B cell (primary cell): ENCODE measurements at regions of chr11 and their contacts with region 1.

Region 1: DNA sequence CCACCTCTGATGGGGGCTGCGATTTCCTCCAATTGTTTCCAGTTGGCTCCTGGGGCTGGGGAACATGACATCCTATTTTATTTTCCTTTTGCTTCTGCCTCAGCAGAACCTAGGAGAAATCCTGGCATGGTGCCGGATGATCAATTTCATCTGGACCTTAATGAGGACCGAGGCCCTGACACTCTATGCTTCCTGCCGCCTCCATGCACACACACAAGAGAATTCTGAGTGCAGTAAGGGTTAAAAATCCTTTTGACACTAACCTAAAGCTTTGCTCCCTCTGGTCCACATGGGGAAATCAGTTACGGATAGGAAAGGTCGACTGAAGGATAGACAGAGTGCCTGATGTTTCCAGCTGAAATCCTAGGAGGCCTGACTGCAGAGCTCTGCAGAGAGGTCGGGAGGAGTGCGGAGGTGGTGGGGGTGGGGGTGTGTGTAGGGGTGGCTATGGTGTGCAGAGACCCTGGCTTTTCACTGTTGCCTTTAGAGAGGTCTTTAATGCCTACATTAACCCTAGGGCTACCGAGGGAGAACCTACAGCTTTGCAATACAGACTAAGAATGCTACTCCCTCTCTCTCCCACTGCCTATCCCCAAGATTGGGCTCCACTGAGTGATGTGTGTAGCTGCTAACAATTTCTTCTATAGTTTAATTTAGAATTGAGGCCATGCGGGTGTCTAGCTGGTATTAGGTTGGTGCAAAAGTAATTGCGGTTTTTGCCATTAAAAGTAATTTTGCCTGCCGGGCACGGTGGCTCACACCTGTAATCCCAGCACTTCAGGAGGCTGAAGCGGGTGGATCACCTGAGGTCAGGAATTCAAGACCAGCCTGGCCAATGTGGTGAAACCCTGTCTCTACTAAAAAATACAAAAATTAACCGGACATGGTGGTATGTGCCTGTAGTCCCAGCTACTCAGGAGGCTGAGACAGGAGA is 53.6 kb upstream of the INCENP start:
- DNase-seq: no peak
- ATAC-seq: no peak
- H3K4me3 ChIP-seq: no peak overlapping the region
- H3K4me3 Mint-ChIP-seq: no peak overlapping the region
- H3K27ac ChIP-seq: no peak overlapping the region
- H3K27ac Mint-ChIP-seq: no peak overlapping the region
- H3K4me1 ChIP-seq: no peaks in the 10 kb centered on the region
- H3K4me1 Mint-ChIP-seq: no peaks in the 10 kb centered on the region
- H3K27me3 ChIP-seq: no peaks in the 10 kb centered on the region
- H3K27me3 Mint-ChIP-seq: peaks cover 23% of the 10 kb centered on the region
- CTCF ChIP-seq: no peak

Region 2: GRCh38 chr11:61860054-61860903 is 210.0 kb before region 1 on chr11:
- CTCF ChIA-PET with region 1: no interaction called
- POLR2A ChIA-PET with region 1: no interaction called
- intact Hi-C with region 1: no loop called
- DNase-seq: no peak
- ATAC-seq: no peak
- H3K4me3 ChIP-seq: no peak overlapping the region
- H3K4me3 Mint-ChIP-seq: no peak overlapping the region
- H3K27ac ChIP-seq: no peak overlapping the region
- H3K27ac Mint-ChIP-seq: no peak overlapping the region
- H3K4me1 ChIP-seq: no peaks in the 10 kb centered on the region
- H3K4me1 Mint-ChIP-seq: no peaks in the 10 kb centered on the region
- H3K27me3 ChIP-seq: no peaks in the 10 kb centered on the region
- H3K27me3 Mint-ChIP-seq: no peaks in the 10 kb centered on the region
- CTCF ChIP-seq: no peak

Region 3: GRCh38 chr11:62923601-62924411 is 853.6 kb after region 1 on chr11:
- CTCF ChIA-PET with region 1: no interaction called
- POLR2A ChIA-PET with region 1: interaction called, 10 read pairs
- intact Hi-C with region 1: no loop called
- DNase-seq: peak; percentile 74
- ATAC-seq: peak; percentile 72
- H3K4me3 ChIP-seq: peak overlapping the region in 4 of 5 experiments; percentile 3 to 64 (median 32)
- H3K4me3 Mint-ChIP-seq: peak overlapping the region; percentile 72
- H3K27ac ChIP-seq: no peak overlapping the region
- H3K27ac Mint-ChIP-seq: no peak overlapping the region
- H3K4me1 ChIP-seq: peaks cover 39 to 41% of the 10 kb centered on the region in 2 donors
- H3K4me1 Mint-ChIP-seq: peaks cover 37% of the 10 kb centered on the region
- H3K27me3 ChIP-seq: peaks cover 0 to 73% (median 41%) of the 10 kb centered on the region in 4 experiments
- H3K27me3 Mint-ChIP-seq: peaks cover 69% of the 10 kb centered on the region
- CTCF ChIP-seq: no peak